Cardiac septum (tissue), 1 donor: ENCODE measurements at regions of chr12 and their contacts with region 1.

Region 1: DNA sequence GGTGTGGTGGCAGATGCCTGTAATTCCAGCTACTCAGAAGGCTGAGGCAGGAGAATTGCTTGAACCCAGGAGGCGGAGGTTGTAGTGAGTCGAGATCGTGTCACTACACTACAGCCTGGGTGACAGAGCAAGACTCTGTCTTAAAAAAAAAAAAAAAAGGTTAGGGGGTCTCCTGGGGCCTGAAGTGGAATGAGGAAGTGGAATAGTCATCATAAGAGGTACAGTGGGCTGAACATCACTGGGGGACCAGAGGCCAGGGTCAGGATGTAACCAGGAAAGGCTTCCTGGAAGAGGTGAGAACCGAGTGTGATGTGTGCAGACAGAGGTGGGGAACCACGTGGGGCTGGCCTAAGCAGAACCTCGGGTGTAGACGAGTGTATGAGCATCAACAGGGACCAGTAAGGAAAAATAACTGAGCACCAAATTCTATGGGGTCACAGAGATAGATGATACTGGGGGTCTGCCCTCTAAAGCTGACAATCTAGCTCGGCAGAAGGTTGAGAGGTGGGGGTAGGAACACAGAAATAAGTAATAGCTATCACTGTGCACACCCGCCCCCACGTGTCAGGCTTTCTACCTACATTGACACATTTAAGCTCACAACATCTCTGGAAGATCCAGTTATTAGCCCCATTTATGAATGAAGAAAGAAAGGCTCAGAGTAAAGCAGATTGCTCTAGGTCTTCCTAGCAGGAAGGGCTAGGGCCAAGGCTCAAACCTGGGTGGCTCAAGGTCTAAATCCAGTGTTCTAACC is 5.0 kb upstream of the COX6A1 start:
- DNase-seq: peak; percentile 33

Region 2: DNA sequence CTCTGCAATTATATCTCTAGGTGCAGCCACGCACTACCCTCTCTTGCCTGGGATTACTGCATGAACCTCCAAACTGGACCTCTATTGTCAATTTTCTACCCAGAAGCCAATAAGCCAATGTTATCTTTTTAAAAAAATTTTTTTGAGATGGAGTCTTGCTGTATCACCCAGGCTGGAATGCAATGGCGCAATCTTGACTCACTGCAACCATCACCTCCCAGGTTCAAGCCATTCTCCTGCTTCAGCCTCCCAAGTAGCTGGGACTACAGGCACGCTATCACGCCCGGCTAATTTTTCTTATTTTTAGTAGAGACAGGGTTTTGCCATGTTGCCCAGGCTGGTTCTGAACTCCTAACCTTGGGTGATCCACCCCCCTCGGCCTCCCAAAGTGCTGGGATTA is 156.2 kb before region 1 on chr12:
- intact Hi-C with region 1: no loop called
- DNase-seq: no peak

Region 3: DNA sequence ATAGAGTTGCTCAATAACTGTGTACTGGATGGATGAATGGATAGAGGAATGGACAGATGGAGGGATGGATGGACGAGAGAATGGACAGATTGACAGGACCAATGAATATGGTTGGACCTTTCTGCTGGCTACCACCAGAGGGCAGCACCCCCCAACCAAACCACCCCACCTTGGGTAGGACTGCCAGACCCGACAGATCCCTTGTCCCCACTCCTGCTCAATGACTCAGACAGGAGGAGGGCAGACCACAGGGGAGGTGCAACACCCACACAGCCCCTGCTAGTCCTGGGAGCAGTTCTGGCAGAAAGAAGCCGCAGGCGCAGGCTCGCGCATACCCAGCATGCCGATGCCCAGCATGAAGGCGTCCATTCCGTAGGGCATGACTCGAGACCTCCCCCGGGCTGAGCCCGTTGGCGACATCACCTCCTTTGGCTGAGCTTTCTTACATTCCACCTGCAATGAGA is 76.3 kb before region 1 on chr12:
- intact Hi-C with region 1: loop called (anchors 1 kb)
- DNase-seq: peak; percentile 89

Region 4: GRCh38 chr12:120971299-120972179 is 538.6 kb after region 1 on chr12:
- intact Hi-C with region 1: no loop called
- DNase-seq: no peak